ENCODE measurements at regions of chr7 and their contacts with region 1.

Region 1: GRCh38 chr7:20598459-20599309 is 16.8 kb upstream of the ABCB5 start:
- DNase-seq: peak; percentile 50
- CTCF ChIP-seq: peak; percentile 84

Region 2: DNA sequence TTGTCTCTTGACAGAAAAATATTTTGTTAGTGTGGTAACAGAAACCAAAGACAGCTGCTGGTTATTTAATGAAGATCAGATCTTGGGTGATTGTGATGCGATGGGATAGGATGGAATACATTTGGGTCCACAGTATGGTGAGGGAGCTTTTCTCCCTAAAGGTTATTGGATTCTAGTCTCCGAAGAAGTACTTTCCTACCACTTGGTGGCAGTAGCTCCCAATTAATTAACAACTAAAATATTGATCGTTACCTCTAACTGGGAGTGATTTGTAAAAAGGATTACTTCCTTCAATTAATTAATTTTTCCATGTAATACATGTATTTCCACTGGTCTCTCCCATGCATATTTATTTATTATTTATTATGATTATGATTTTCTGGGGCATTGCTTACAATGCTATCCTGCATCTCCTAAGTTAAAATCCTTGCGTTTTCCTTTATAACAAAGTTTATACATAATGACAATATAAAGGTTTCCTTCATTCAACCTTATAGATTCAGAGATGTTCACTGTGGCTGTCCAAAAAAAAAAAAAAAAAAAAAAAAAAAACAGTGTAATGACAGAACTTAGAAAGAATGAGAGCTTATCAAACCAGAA is 850.8 kb before region 1 on chr7:
- CTCF ChIA-PET with region 1: interaction called, 76 read pairs
- POLR2A ChIA-PET with region 1: no interaction called
- DNase-seq: peak; percentile 40
- CTCF ChIP-seq: peak; percentile 42

Region 3: DNA sequence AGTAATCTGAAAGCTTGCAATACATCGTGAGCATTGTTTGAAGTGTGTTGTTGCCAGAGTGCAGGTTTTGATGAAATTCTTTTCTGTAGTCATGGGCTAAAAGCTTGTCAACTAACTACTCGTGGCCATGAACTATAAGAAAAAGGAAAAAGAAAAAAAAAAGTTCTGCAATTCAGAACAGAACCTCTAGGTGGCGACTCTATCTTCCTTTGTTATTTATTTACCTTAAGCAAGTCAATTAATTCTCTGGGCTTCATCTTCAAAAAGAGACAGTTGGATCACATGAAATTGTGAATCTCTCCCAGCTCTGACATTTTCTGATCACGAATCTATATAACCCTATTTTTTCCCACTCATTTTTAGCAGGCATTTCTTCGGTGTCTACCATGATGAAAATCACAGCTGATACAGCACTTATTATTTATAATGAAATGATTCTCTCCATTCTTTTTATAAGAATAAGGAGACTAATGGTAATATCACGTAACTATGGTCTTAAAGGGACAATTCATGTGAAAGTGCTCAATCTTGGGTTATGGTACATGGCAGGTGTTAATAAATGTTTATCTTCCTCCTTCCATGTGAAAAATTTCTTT is 844.1 kb before region 1 on chr7:
- CTCF ChIA-PET with region 1: interaction called, 26 read pairs
- POLR2A ChIA-PET with region 1: no interaction called
- DNase-seq: peak; percentile 20
- CTCF ChIP-seq: peak; percentile 68

Region 4: DNA sequence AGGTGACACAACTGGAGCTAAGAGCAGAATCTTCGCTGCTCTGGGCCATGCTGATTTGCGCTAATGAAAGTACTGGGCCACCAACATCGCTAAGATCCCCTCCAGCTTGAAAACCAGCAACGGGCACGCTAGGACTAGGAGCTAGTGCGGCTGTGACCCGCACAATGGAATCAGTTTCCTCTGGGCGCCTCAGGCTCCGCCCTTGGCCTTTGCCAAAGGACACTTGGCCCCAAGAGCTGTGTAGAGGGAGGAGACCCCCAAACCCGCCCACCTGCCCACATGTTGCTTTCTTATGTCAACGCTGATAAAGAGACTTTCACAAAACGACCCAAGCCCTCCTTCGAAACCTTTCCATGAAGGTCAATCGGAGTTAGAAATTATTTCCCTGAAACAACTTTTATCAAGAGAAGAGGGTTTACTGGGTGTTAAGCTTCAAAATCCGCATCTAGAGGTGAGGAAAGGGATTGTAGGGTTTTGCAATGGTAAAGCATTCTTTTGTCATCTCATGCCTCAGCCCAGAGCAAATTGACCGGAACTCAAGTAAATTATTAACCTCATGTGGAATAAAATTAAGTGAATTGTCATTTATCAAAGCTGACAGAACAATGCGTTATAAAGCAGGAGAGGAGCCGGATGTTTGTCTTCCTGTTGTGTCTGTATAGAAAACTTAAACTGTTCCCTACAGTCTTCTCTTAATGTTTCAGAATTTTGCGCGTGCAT is 26.1 kb after region 1 on chr7:
- CTCF ChIA-PET with region 1: no interaction called
- POLR2A ChIA-PET with region 1: no interaction called
- DNase-seq: no peak
- CTCF ChIP-seq: no peak

Region 5: DNA sequence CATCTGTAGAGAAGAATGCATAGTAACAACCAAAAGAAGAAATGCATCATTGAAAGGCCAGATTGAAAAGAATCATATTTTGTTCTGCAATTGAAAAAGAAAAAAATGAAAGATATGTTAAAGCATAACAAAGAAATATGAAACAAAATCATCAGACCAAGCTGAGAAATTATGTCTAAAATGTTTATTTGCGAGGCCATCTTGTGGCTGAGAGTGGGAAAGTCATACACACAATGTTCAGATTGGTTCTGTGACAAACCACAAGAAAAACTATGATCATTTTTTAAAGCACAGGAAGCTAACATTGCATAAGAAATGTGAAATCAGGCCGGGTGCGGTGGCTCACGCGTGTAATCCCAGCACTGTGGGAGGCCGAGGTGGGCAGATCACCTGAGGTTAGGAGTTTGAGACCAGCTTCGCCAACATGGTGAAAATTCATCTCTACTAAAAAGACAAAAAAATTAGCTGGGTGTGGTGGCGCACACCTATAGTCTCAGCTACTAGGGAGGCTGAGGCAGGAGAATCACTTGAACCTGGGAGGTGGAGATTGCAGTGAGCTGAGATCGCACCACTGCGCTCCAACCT is 53.4 kb after region 1 on chr7:
- CTCF ChIA-PET with region 1: no interaction called
- POLR2A ChIA-PET with region 1: no interaction called
- DNase-seq: no peak
- CTCF ChIP-seq: peak; percentile 34